ENCODE measurements at regions of chr22 and their contacts with region 1.

Region 1: GRCh38 chr22:22959147-22959827 is 71.7 kb downstream of the IGLL5 start:
- DNase-seq: peak; percentile 37 to 84 (median 64)
- ATAC-seq: peak; percentile 81
- H3K4me3 ChIP-seq: no peak overlapping the region
- H3K4me3 Mint-ChIP-seq: no peak overlapping the region
- H3K27ac ChIP-seq: no peak overlapping the region
- H3K27ac Mint-ChIP-seq: no peak overlapping the region
- H3K4me1 ChIP-seq: no peaks in the 10 kb centered on the region
- H3K4me1 Mint-ChIP-seq: peaks cover 0 to 10% (median 4%) of the 10 kb centered on the region in 7 donors
- H3K27me3 ChIP-seq: no peaks in the 10 kb centered on the region
- H3K27me3 Mint-ChIP-seq: peaks cover 8 to 44% (median 23%) of the 10 kb centered on the region in 5 donors

Region 2: DNA sequence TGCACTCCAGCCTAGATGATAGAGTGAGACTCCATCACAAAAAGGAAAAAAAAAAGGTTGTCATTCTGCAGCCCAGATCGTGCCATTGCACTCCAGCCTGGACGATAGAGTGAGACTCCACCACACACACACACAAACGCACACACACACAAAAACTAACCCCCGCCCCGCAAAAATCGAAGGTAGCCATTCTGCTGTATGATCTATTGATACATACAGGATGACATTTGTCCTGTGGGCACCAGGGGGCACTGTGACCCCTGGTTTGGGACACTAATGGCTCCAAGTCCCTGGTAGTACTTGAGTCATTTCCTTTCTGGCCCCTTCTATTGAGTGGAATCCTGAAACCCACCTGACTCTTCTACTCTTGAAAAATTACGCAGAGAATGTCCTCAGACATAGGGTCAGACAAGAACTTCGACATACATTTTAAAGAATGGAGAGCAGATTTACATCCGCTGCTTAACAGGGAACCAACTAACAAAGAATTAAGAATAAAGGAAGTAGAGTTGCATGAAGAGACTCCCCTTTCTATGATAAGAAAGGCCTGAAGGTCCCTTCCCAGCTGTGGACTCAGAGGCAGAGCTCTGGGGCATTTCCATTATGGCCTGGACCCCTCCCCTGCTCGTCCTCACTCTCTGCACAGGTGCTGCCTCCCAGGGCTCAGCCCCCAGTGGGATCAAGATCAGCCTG is 365.2 kb before region 1 on chr22:
- CTCF ChIA-PET with region 1: no interaction called
- POLR2A ChIA-PET with region 1: no interaction called
- intact Hi-C with region 1: loop called in 1 of 2 experiments (anchors 1 kb)
- DNase-seq: peak; percentile 23 to 53 (median 34)
- ATAC-seq: peak; percentile 81
- H3K4me3 ChIP-seq: no peak overlapping the region
- H3K4me3 Mint-ChIP-seq: no peak overlapping the region
- H3K27ac ChIP-seq: no peak overlapping the region
- H3K27ac Mint-ChIP-seq: no peak overlapping the region
- H3K4me1 ChIP-seq: no peaks in the 10 kb centered on the region
- H3K4me1 Mint-ChIP-seq: peaks cover 0 to 5% (median 0%) of the 10 kb centered on the region in 7 donors
- H3K27me3 ChIP-seq: no peaks in the 10 kb centered on the region
- H3K27me3 Mint-ChIP-seq: peaks cover 0 to 9% (median 6%) of the 10 kb centered on the region in 5 donors

Region 3: DNA sequence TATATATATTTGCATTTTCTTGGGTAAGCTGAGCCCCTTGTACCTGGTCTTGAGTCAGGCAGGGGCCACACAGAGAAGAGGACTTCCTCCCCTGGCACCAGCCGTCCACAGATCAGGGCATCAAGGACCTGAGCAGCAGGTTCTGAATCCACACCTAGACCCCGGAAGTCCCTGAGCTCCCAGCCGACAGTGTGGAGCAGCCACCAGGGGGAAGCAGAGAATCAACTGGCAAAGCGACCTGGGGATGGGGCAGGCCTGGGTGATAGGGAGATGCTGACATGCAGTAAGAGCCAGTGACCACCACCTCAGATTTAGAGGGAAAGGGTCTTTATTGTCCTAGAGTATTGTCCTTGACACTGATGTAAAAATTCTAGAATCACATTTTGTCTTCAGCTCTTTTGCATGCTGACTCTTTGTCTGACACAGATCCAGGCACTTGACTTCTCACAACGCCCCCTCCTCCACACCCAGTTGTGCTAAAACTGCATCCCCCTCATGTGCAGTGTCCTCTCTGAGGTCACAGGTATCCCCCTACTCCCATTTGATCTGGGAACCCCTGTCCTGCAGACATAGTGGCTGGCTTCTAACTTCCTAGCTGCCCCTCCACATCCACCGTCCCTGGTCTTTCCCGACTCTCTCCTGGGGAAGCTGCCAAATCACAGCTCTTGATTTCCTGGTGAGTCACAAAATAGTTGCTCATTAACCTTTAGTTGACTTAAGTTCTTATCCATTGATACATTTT is 205.6 kb before region 1 on chr22:
- CTCF ChIA-PET with region 1: interaction called, 15 read pairs
- POLR2A ChIA-PET with region 1: no interaction called
- intact Hi-C with region 1: loop called in 1 of 2 experiments (anchors 1 kb)
- DNase-seq: peak; percentile 52 to 78 (median 74)
- ATAC-seq: peak; percentile 92
- H3K4me3 ChIP-seq: peak overlapping the region; percentile 29
- H3K4me3 Mint-ChIP-seq: peak overlapping the region in 8 of 10 donors; percentile 57 to 72 (median 68)
- H3K27ac ChIP-seq: peak overlapping the region; percentile 57
- H3K27ac Mint-ChIP-seq: peak overlapping the region in 8 of 9 donors; percentile 88 to 96 (median 95)
- H3K4me1 ChIP-seq: peaks cover 11 to 57% of the 10 kb centered on the region in 2 donors
- H3K4me1 Mint-ChIP-seq: peaks cover 4 to 48% (median 44%) of the 10 kb centered on the region in 7 donors
- H3K27me3 ChIP-seq: no peaks in the 10 kb centered on the region
- H3K27me3 Mint-ChIP-seq: peaks cover 0 to 3% (median 0%) of the 10 kb centered on the region in 5 donors

Region 4: GRCh38 chr22:22810018-22810427 is 149.3 kb before region 1 on chr22:
- CTCF ChIA-PET with region 1: interaction called, 10 read pairs
- POLR2A ChIA-PET with region 1: no interaction called
- intact Hi-C with region 1: no loop called
- DNase-seq: peak; percentile 44 to 89 (median 67)
- ATAC-seq: peak; percentile 80
- H3K4me3 ChIP-seq: no peak overlapping the region
- H3K4me3 Mint-ChIP-seq: peak overlapping the region in 1 of 10 donors; percentile 49
- H3K27ac ChIP-seq: no peak overlapping the region
- H3K27ac Mint-ChIP-seq: peak overlapping the region in 5 of 9 donors; percentile 51 to 73 (median 69)
- H3K4me1 ChIP-seq: peaks cover 8 to 34% of the 10 kb centered on the region in 2 donors
- H3K4me1 Mint-ChIP-seq: peaks cover 15 to 55% (median 48%) of the 10 kb centered on the region in 7 donors
- H3K27me3 ChIP-seq: no peaks in the 10 kb centered on the region
- H3K27me3 Mint-ChIP-seq: peaks cover 0 to 35% (median 0%) of the 10 kb centered on the region in 5 donors

Region 5: DNA sequence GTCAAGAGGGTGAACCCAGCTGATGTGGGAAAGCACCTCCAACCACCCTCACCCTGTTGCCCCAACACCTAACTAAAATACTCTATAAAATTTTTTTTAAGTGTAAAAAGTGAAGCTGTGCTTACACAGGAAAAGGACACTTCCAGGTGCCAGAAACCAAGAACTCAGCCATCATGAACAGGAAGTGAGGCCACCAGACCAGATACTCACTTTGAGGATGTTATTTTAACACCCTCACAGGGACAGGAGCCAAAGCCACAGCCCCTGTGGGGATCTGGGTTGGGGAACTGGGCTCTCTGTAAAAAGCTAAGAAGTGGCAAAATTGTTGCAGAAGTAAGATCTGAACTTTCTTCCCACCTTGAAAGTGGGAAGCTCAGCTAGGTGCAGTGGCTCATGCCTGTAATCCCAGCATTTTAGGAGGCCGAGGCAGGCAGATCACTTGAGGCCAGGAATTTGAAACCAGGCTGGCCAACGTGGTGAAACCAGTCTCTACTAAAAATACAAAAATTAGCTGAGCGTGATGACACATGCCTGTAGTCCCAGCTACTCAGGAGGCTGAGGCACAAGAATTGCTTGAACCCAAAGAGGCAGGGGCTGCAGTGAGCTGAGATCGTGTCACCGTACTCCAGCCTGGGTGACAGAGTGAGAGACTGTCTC is 178.7 kb after region 1 on chr22:
- CTCF ChIA-PET with region 1: interaction called, 147 read pairs
- POLR2A ChIA-PET with region 1: no interaction called
- intact Hi-C with region 1: no loop called
- DNase-seq: peak; percentile 25 to 61 (median 45)
- ATAC-seq: peak; percentile 54
- H3K4me3 ChIP-seq: peak overlapping the region; percentile 44
- H3K4me3 Mint-ChIP-seq: peak overlapping the region; percentile 62 to 83 (median 72)
- H3K27ac ChIP-seq: peak overlapping the region; percentile 72
- H3K27ac Mint-ChIP-seq: peak overlapping the region; percentile 91 to 99 (median 96)
- H3K4me1 ChIP-seq: peaks cover 53 to 67% of the 10 kb centered on the region in 2 donors
- H3K4me1 Mint-ChIP-seq: peaks cover 21 to 56% (median 51%) of the 10 kb centered on the region in 7 donors
- H3K27me3 ChIP-seq: no peaks in the 10 kb centered on the region
- H3K27me3 Mint-ChIP-seq: peaks cover 0 to 5% (median 0%) of the 10 kb centered on the region in 5 donors

Region 6: DNA sequence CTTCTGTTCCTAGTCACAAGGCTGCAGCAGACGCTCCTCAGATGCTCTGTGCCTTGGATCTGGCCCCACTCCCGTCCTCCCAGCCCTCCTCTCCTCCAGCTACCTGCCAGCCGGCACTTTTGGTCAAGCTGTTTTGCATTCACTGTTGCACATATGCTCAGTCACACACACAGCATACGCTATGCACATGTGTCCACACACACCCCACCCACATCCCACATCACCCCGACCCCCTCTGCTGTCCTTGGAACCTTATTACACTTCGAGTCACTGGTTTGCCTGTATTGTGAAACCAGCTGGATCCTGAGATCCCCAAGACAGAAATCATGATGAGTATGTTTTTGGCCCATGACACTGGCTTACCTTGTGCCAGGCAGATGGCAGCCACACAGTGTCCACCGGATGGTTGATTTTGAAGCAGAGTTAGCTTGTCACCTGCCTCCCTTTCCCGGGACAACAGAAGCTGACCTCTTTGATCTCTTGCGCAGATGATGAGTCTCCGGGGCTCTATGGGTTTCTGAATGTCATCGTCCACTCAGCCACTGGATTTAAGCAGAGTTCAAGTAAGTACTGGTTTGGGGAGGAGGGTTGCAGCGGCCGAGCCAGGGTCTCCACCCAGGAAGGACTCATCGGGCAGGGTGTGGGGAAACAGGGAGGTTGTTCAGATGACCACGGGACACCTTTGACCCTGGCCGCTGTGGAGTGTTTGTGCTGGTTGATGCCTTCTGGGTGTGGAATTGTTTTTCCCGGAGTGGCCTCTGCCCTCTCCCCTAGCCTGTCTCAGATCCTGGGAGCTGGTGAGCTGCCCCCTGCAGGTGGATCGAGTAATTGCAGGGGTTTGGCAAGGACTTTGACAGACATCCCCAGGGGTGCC is 330.8 kb after region 1 on chr22:
- CTCF ChIA-PET with region 1: interaction called, 6 read pairs
- POLR2A ChIA-PET with region 1: no interaction called
- intact Hi-C with region 1: loop called in 1 of 2 experiments (anchors 10 kb)
- DNase-seq: peak; percentile 13 to 67 (median 45)
- ATAC-seq: peak; percentile 71
- H3K4me3 ChIP-seq: no peak overlapping the region
- H3K4me3 Mint-ChIP-seq: no peak overlapping the region
- H3K27ac ChIP-seq: no peak overlapping the region
- H3K27ac Mint-ChIP-seq: peak overlapping the region in 2 of 9 donors; percentile 51 to 55
- H3K4me1 ChIP-seq: no peaks in the 10 kb centered on the region
- H3K4me1 Mint-ChIP-seq: peaks cover 0 to 5% (median 0%) of the 10 kb centered on the region in 7 donors
- H3K27me3 ChIP-seq: no peaks in the 10 kb centered on the region
- H3K27me3 Mint-ChIP-seq: no peaks in the 10 kb centered on the region

Measured in naive thymus-derived CD4-positive, alpha-beta T cell (primary cell).